BJ (cell line): ENCODE measurements at regions of chr10 and their contacts with region 1.

Region 1: GRCh38 chr10:49164559-49165188 is 23.5 kb downstream of the TMEM273 start:
- DNase-seq: no peak
- H3K4me3 ChIP-seq: no peak overlapping the region
- H3K27me3 ChIP-seq: no peaks in the 10 kb centered on the region
- CTCF ChIP-seq: peak; percentile 64

Region 2: DNA sequence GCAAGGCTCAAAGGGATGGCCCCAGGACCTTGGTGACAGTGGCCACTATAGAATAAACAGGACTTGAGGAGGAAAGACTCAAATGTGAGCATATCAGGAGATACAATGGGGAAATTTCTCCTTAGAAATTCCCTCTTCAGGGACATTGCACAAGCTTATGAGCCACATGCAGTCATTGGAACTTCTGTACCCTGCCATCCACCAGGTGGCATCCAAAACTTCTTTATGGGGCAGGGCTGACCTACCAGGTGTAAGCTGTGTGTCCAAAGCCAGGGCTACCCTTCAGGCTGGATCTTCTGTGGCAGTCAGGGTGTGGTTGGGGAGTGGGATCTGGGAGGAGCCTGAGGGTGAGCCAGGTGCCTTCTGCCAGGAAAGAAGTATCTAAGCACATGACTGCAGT is 188.5 kb before region 1 on chr10:
- CTCF ChIA-PET with region 1: interaction called, 45 read pairs
- POLR2A ChIA-PET with region 1: no interaction called
- DNase-seq: no peak
- H3K4me3 ChIP-seq: no peak overlapping the region
- H3K27me3 ChIP-seq: peaks cover 9% of the 10 kb centered on the region
- CTCF ChIP-seq: peak; percentile 22; the same call in 1 of the 2 replicates

Region 3: GRCh38 chr10:48981310-48981907 is 183.3 kb before region 1 on chr10:
- CTCF ChIA-PET with region 1: interaction called, 45 read pairs
- POLR2A ChIA-PET with region 1: no interaction called
- DNase-seq: no peak
- H3K4me3 ChIP-seq: no peak overlapping the region
- H3K27me3 ChIP-seq: peaks cover 7% of the 10 kb centered on the region
- CTCF ChIP-seq: peak; percentile 92

Region 4: DNA sequence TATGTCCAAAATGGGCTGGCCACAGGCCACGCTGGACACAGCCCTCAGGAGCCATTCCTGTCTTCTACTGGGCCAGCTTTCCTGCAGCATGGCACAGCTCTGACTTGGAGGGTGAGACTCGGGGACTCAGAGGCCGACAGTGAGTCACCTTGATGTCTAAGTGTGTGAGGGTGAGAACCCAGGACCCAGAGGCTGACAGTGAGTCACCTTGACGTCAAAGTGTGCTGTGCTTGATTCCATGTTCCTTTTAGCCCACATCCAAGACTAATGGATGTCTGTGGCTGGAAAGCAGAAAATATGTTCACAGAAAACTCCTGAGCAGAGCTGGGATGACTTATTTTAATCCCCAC is 24.9 kb before region 1 on chr10:
- CTCF ChIA-PET with region 1: interaction called, 11 read pairs
- POLR2A ChIA-PET with region 1: no interaction called
- DNase-seq: peak; percentile 83
- H3K4me3 ChIP-seq: no peak overlapping the region
- H3K27me3 ChIP-seq: no peaks in the 10 kb centered on the region; the same call in 1 of the 2 replicates
- CTCF ChIP-seq: no peak

Region 5: GRCh38 chr10:49285232-49285631 is 120.6 kb after region 1 on chr10:
- CTCF ChIA-PET with region 1: no interaction called
- POLR2A ChIA-PET with region 1: no interaction called
- DNase-seq: no peak
- H3K4me3 ChIP-seq: no peak overlapping the region
- H3K27me3 ChIP-seq: no peaks in the 10 kb centered on the region; the same call in 1 of the 2 replicates
- CTCF ChIP-seq: no peak